ENCODE measurements at regions of chr2 and their contacts with region 1.

Region 1: GRCh38 chr2:69914170-69914960 is 544 bp upstream of the MXD1 start:
- DNase-seq: peak; percentile 95

Region 2: GRCh38 chr2:69973335-69973735 is 59.0 kb after region 1 on chr2:
- CTCF ChIA-PET with region 1: no interaction called
- POLR2A ChIA-PET with region 1: no interaction called
- DNase-seq: no peak

Region 3: DNA sequence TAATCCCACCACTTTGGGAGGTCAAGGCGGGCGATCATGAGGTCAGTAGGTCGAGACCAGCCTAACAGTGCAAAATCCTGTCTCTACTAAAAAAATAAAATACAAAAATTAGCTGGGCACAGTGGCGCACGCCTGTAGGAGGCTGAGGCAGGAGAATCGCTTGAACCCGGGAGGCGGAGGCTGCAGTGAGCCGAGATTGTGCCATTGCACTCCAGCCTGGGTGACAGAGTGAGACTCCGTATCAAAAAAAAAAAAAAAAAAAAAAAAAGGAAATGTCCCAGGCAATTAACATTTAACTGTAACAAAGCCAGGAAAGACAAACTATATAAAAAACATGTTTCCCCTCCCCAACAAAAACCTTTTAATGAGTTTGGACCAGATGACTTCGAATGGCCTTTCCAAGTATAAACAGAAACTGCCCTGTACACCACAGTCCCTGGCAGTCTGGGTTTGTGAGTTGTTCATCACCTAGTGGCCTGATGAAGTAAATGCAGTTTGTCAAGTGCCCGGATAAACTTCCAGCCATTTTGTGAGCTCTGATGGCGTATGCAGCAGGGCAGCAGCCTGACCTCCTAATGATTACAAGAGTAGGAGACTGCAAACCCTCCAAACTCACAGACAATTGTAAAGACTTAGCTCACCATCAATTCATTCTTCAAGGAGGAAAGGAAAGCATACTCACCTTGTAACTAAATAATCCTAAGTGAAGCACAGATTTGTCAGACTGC is 156.3 kb after region 1 on chr2:
- CTCF ChIA-PET with region 1: interaction called, 8 read pairs
- POLR2A ChIA-PET with region 1: interaction called, 15 read pairs
- DNase-seq: peak; percentile 87

Region 4: GRCh38 chr2:70142590-70143313 is 228.4 kb after region 1 on chr2:
- CTCF ChIA-PET with region 1: interaction called, 4 read pairs
- POLR2A ChIA-PET with region 1: interaction called, 62 read pairs
- DNase-seq: peak; percentile 98

Region 5: DNA sequence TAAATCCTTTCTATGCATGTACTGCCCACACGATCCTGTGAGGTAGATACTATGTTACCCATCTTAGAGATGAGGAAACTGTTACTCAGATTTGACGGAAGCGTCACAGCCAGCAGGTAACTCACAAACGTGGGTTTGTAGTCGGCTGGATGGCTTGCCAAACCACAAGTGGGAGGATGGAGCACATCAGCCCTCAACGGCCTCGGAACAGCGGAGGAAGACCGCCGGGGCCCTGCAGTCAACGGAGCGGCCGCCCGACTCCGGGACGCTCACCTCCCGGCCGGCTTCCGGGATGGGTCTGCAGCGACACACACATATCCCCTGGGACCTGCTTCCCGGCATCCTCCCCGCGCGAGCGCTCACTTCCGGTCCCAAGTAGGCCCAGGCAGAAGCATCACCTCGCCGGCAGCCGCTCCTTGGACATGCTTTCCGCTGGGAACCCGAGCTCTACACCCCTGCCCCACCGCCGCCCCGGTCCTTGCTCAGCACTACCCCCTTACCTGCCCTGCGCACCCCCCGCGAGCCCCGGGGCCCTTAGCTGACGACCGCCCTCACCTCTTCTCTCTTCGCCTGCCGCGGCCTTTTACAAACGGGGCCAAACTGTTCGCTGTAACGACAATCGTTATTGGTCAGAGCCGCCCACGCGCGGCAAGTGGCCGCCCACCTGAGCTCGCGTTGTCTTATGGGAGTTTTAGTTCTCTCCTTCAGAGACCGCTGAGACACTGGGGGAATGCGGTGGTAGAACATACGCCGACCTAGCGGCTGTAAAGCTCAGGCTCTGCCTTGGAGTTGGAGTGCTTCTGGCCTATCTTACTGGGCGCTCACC is 276.3 kb after region 1 on chr2 and contains the start of gene C2orf42:
- CTCF ChIA-PET with region 1: no interaction called
- POLR2A ChIA-PET with region 1: interaction called, 15 read pairs
- DNase-seq: peak; percentile 94